ENCODE measurements at regions of chr18 and their contacts with region 1.

Region 1: DNA sequence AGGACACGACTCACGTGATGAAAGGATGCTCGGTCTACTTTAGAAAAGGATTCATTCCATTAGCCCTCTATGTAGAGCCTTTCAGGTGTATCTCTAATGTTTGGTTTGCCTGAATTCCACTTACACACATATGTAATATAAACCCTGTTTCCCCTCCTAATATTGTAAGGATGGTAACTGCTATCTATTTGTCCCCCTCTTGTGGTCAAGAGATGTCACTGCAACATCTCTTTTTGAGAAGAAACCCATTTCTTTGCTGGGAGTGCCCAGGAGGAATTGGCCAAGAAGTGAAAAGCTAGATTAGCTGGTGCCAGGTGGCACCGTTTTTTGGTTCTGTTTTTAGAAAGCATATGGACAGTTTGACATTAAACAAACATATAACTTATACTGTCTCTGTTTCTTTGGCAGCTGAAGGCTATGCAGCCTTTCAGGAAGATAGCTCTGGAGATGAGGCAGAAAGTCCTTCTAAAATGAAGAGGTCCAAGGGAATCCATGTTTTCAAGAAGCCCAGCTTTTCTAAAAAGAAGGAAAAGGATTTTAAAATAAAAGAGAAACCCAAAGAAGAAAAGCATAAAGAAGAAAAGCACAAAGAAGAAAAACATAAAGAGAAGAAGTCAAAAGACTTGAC is 41.2 kb downstream of the RALBP1 start:
- DNase-seq: no peak
- ATAC-seq: no peak
- H3K4me3 ChIP-seq: no peak overlapping the region
- H3K27ac ChIP-seq: no peak overlapping the region
- H3K4me1 ChIP-seq: peaks cover 0 to 5% of the 10 kb centered on the region in 2 donors
- H3K27me3 ChIP-seq: no peaks in the 10 kb centered on the region
- CTCF ChIP-seq: peak; percentile 53 to 86 (median 75)
- POLR2A ChIP-seq: no peak

Region 2: GRCh38 chr18:8654503-8655451 is 861.8 kb before region 1 on chr18:
- in situ Hi-C with region 1: no loop called
- intact Hi-C with region 1: loop called (anchors 10 kb)
- DNase-seq: no peak
- ATAC-seq: peak; percentile 62
- H3K4me3 ChIP-seq: no peak overlapping the region
- H3K27ac ChIP-seq: no peak overlapping the region
- H3K4me1 ChIP-seq: no peaks in the 10 kb centered on the region
- H3K27me3 ChIP-seq: no peaks in the 10 kb centered on the region
- CTCF ChIP-seq: peak; percentile 55 to 84 (median 78)
- POLR2A ChIP-seq: no peak

Region 3: GRCh38 chr18:9055185-9055584 is 461.4 kb before region 1 on chr18:
- in situ Hi-C with region 1: loop called in 3 of 4 experiments (anchors 25 kb)
- intact Hi-C with region 1: no loop called
- DNase-seq: no peak
- ATAC-seq: peak; percentile 77 to 84
- H3K4me3 ChIP-seq: no peak overlapping the region
- H3K27ac ChIP-seq: no peak overlapping the region
- H3K4me1 ChIP-seq: peaks cover 0 to 8% of the 10 kb centered on the region in 2 donors
- H3K27me3 ChIP-seq: no peaks in the 10 kb centered on the region
- CTCF ChIP-seq: no peak
- POLR2A ChIP-seq: no peak

Region 4: GRCh38 chr18:9066817-9067306 is 449.7 kb before region 1 on chr18:
- in situ Hi-C with region 1: loop called (anchors 10 to 25 kb)
- intact Hi-C with region 1: loop called (anchors 5 kb)
- DNase-seq: no peak
- ATAC-seq: no peak
- H3K4me3 ChIP-seq: no peak overlapping the region
- H3K27ac ChIP-seq: no peak overlapping the region
- H3K4me1 ChIP-seq: peaks cover 0 to 7% of the 10 kb centered on the region in 2 donors
- H3K27me3 ChIP-seq: no peaks in the 10 kb centered on the region
- CTCF ChIP-seq: no peak
- POLR2A ChIP-seq: no peak

Region 5: GRCh38 chr18:9079818-9080528 is 436.6 kb before region 1 on chr18:
- in situ Hi-C with region 1: loop called in 1 of 4 experiments (anchors 10 kb)
- intact Hi-C with region 1: no loop called
- DNase-seq: no peak
- ATAC-seq: no peak
- H3K4me3 ChIP-seq: no peak overlapping the region
- H3K27ac ChIP-seq: no peak overlapping the region
- H3K4me1 ChIP-seq: no peaks in the 10 kb centered on the region
- H3K27me3 ChIP-seq: no peaks in the 10 kb centered on the region
- CTCF ChIP-seq: no peak
- POLR2A ChIP-seq: no peak

Region 6: DNA sequence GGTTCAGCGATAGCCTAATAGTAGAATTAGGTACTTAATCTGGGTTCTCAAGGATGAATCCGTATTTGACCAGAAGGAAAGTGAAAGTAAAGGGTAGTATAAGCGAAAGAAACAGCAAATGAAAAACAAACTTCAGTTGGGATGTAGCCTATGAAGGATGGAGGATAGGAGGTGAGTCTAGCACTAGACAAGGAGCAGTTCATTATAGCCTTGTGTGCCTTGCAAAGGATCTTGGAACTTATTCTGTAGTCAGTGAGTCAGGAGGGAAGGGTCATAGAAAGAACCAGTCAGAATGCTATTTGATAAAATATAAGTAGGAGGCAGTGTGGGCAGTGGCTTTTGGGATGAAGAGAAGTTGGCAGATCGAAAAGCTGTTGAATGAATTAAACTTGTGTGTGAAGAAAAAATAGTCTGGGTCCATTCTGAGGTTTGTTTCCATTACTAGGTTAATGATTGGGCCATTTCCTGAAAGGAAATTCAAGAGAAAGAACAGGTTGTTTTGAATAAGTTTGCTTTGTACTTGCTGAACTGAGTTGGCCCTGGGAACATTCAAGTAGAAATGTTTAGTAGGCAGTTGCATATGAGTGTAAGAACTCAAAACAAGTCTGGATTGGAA is 331.4 kb before region 1 on chr18:
- in situ Hi-C with region 1: loop called in 1 of 4 experiments (anchors 25 kb)
- intact Hi-C with region 1: no loop called
- DNase-seq: no peak
- ATAC-seq: no peak
- H3K4me3 ChIP-seq: peak overlapping the region in 1 of 4 donors; percentile 13
- H3K27ac ChIP-seq: peak overlapping the region; percentile 3 to 44 (median 24)
- H3K4me1 ChIP-seq: peaks cover 4 to 16% of the 10 kb centered on the region in 2 donors
- H3K27me3 ChIP-seq: no peaks in the 10 kb centered on the region
- CTCF ChIP-seq: no peak
- POLR2A ChIP-seq: no peak

Region 7: GRCh38 chr18:9474983-9475642 is 41.4 kb before region 1 on chr18 and contains the start of gene RALBP1:
- in situ Hi-C with region 1: no loop called
- intact Hi-C with region 1: loop called (anchors 2 kb)
- DNase-seq: peak; percentile 98 to 99
- ATAC-seq: peak; percentile 94 to 95
- H3K4me3 ChIP-seq: peak within 1 kb of the TSS; percentile 72 to 94 (median 88)
- H3K27ac ChIP-seq: peak within 1 kb of the TSS; percentile 84 to 98 (median 91)
- H3K4me1 ChIP-seq: peaks cover 13 to 21% of the 10 kb centered on the region in 2 donors
- H3K27me3 ChIP-seq: no peaks in the 10 kb centered on the region
- CTCF ChIP-seq: peak in 2 of 5 experiments; percentile 23 to 36
- POLR2A ChIP-seq: peak; percentile 74 to 94
- total RNA-seq, gene RALBP1: 41.5 to 108 (median 78.1) TPM

Region 8: DNA sequence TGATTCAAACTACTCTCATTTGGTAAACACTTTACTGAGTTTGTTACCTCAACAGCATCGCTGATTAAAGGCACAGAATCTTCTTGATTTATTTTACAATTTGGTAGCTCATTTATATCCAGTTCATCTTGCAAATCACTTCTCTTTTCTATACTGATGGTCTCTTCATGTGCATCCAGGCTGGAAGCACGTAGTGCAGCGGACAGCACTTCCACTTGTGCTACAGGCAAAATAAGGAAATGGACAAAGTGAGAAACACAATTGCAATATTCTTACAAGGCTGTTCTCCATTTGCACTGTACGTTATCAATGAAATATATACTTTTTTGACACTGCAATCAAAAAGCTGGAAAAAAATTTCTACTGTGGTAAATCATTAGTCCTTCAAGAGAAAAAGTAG is 46.8 kb after region 1 on chr18:
- in situ Hi-C with region 1: no loop called
- intact Hi-C with region 1: no loop called
- DNase-seq: peak in 1 of 2 donors; percentile 34
- ATAC-seq: no peak
- H3K4me3 ChIP-seq: no peak overlapping the region
- H3K27ac ChIP-seq: no peak overlapping the region
- H3K4me1 ChIP-seq: no peaks in the 10 kb centered on the region
- H3K27me3 ChIP-seq: no peaks in the 10 kb centered on the region
- CTCF ChIP-seq: no peak
- POLR2A ChIP-seq: no peak

Region 9: GRCh38 chr18:9619545-9619944 is 103.0 kb after region 1 on chr18:
- in situ Hi-C with region 1: no loop called
- intact Hi-C with region 1: no loop called
- DNase-seq: no peak
- ATAC-seq: no peak
- H3K4me3 ChIP-seq: no peak overlapping the region
- H3K27ac ChIP-seq: no peak overlapping the region
- H3K4me1 ChIP-seq: peaks cover 0 to 6% of the 10 kb centered on the region in 2 donors
- H3K27me3 ChIP-seq: no peaks in the 10 kb centered on the region
- CTCF ChIP-seq: no peak
- POLR2A ChIP-seq: no peak

Measured in gastrocnemius medialis (tissue), 4 donors.